Naive thymus-derived CD4-positive, alpha-beta T cell (primary cell): ENCODE measurements at regions of chr21 and their contacts with region 1.

Region 1: GRCh38 chr21:14523234-14523633 is 22.9 kb downstream of the SAMSN1 start:
- DNase-seq: peak in 1 of 9 donors; percentile 55
- ATAC-seq: peak; percentile 74
- H3K4me3 ChIP-seq: no peak overlapping the region
- H3K4me3 Mint-ChIP-seq: peak overlapping the region in 9 of 10 donors; percentile 22 to 85 (median 50)
- H3K27ac ChIP-seq: no peak overlapping the region
- H3K27ac Mint-ChIP-seq: peak overlapping the region in 6 of 9 donors; percentile 9 to 85 (median 72)
- H3K4me1 ChIP-seq: peaks cover 16 to 29% of the 10 kb centered on the region in 2 donors
- H3K4me1 Mint-ChIP-seq: peaks cover 32 to 74% (median 66%) of the 10 kb centered on the region in 7 donors
- H3K27me3 ChIP-seq: no peaks in the 10 kb centered on the region
- H3K27me3 Mint-ChIP-seq: no peaks in the 10 kb centered on the region

Region 2: GRCh38 chr21:14469641-14470040 is 53.6 kb before region 1 on chr21:
- CTCF ChIA-PET with region 1: no interaction called
- POLR2A ChIA-PET with region 1: no interaction called
- intact Hi-C with region 1: no loop called
- DNase-seq: no peak
- ATAC-seq: no peak
- H3K4me3 ChIP-seq: no peak overlapping the region
- H3K4me3 Mint-ChIP-seq: no peak overlapping the region
- H3K27ac ChIP-seq: no peak overlapping the region
- H3K27ac Mint-ChIP-seq: no peak overlapping the region
- H3K4me1 ChIP-seq: no peaks in the 10 kb centered on the region
- H3K4me1 Mint-ChIP-seq: peaks cover 0 to 3% (median 0%) of the 10 kb centered on the region in 7 donors
- H3K27me3 ChIP-seq: no peaks in the 10 kb centered on the region
- H3K27me3 Mint-ChIP-seq: no peaks in the 10 kb centered on the region

Region 3: DNA sequence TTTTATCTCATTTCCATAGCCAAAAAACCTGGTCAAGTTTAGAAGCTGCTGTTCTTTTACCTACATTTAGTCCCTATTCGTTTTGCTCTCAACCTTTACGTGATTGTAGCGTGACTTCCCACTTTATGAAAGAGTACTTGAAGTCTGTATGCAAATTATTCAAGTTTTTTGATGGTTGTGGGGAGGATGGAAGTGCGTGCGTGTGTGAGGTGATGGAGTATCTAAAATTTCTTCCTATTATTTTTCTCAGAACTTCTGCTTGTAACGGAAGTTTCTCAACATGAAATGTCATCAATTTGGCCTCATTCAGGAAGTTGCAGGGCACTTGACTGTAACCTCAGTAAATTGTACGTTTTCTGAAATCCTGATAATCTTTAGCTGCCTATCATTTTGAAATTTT is 41.1 kb before region 1 on chr21:
- CTCF ChIA-PET with region 1: no interaction called
- POLR2A ChIA-PET with region 1: no interaction called
- intact Hi-C with region 1: loop called in 1 of 2 experiments (anchors 5 kb)
- DNase-seq: peak in 7 of 9 donors; percentile 29 to 66 (median 53)
- ATAC-seq: peak; percentile 89
- H3K4me3 ChIP-seq: peak overlapping the region; percentile 34
- H3K4me3 Mint-ChIP-seq: peak overlapping the region; percentile 1 to 79 (median 68)
- H3K27ac ChIP-seq: peak overlapping the region; percentile 9
- H3K27ac Mint-ChIP-seq: peak overlapping the region; percentile 37 to 90 (median 72)
- H3K4me1 ChIP-seq: peaks cover 0 to 13% of the 10 kb centered on the region in 2 donors
- H3K4me1 Mint-ChIP-seq: peaks cover 8 to 64% (median 16%) of the 10 kb centered on the region in 7 donors
- H3K27me3 ChIP-seq: no peaks in the 10 kb centered on the region
- H3K27me3 Mint-ChIP-seq: no peaks in the 10 kb centered on the region

Region 4: GRCh38 chr21:14492931-14493330 is 30.3 kb before region 1 on chr21:
- CTCF ChIA-PET with region 1: no interaction called
- POLR2A ChIA-PET with region 1: no interaction called
- intact Hi-C with region 1: loop called in 1 of 2 experiments (anchors 2 kb)
- DNase-seq: no peak
- ATAC-seq: no peak
- H3K4me3 ChIP-seq: no peak overlapping the region
- H3K4me3 Mint-ChIP-seq: no peak overlapping the region
- H3K27ac ChIP-seq: no peak overlapping the region
- H3K27ac Mint-ChIP-seq: peak overlapping the region in 2 of 9 donors; percentile 5 to 18
- H3K4me1 ChIP-seq: no peaks in the 10 kb centered on the region
- H3K4me1 Mint-ChIP-seq: peaks cover 7 to 57% (median 16%) of the 10 kb centered on the region in 7 donors
- H3K27me3 ChIP-seq: no peaks in the 10 kb centered on the region
- H3K27me3 Mint-ChIP-seq: no peaks in the 10 kb centered on the region

Region 5: DNA sequence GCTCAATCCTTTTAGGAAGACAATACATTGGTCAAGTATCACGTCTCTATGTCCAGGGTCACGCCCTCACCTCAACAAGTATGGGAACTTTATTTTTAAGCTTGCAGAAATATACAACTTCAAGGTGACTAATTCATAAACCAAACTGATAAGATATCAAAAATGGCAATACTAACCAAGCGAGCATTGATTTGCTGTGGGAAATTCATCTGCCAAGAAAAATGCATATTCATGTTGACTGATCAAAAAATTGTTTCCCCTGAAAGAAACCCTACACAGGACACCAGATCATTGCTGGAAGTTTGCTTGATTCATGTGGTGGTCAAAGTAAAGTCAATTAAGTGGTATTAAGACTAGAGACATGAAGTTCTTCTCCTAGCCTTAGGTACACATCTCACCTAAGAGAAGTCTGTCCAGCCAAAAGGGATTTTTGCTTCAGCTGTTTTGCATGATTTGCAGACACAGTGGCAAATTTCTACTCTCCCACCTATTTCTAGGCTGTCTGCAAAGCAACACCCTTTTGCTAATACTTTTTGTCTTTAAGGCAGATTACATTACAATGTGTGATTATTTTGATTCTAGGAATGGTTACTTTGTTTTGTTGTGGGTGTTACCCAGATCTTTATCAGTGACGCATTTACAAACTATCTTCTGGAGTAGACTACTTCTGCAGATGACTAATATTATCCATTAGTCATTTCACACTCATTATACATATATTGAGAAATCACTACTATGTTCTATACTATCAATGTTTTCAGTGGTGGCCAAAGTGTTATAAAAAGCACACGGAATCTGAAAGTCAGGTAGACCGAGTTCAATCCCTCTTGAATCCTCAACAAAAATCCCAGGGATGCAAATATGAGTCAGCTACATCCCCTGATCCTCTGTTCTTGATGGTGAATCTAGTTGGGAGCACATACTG is 10.5 kb after region 1 on chr21:
- CTCF ChIA-PET with region 1: interaction called, 5 read pairs
- POLR2A ChIA-PET with region 1: interaction called, 3 read pairs
- intact Hi-C with region 1: loop called (anchors 1 kb)
- DNase-seq: peak in 3 of 9 donors; percentile 15 to 49 (median 22)
- ATAC-seq: peak; percentile 88
- H3K4me3 ChIP-seq: peak overlapping the region; percentile 22
- H3K4me3 Mint-ChIP-seq: peak overlapping the region in 8 of 10 donors; percentile 3 to 85 (median 47)
- H3K27ac ChIP-seq: no peak overlapping the region
- H3K27ac Mint-ChIP-seq: peak overlapping the region in 8 of 9 donors; percentile 25 to 95 (median 82)
- H3K4me1 ChIP-seq: peaks cover 10 to 30% of the 10 kb centered on the region in 2 donors
- H3K4me1 Mint-ChIP-seq: peaks cover 37 to 81% (median 67%) of the 10 kb centered on the region in 7 donors
- H3K27me3 ChIP-seq: no peaks in the 10 kb centered on the region
- H3K27me3 Mint-ChIP-seq: no peaks in the 10 kb centered on the region

Region 6: DNA sequence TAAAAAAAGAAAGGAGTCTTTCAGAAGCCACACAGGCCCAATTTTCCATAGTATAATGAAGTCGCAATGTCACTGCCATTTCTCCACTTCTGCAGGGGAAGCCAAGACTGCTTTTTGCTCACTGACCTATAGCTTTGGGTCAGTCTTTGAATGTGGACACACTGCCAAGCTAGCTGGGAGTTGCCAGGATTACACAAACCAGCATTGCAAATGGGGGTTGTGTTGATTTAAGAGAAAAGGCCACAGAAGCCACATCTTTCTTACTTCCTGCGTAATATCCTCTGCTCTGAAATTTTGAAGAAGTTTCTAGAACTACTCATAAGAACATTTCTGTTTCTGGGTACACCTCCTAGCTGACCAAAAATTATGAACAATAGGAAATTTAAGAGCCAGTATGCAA is 68.6 kb after region 1 on chr21:
- CTCF ChIA-PET with region 1: interaction called, 4 read pairs
- POLR2A ChIA-PET with region 1: no interaction called
- intact Hi-C with region 1: loop called in 1 of 2 experiments (anchors 5 kb)
- DNase-seq: peak in 4 of 9 donors; percentile 6 to 24 (median 11)
- ATAC-seq: peak; percentile 91
- H3K4me3 ChIP-seq: no peak overlapping the region
- H3K4me3 Mint-ChIP-seq: peak overlapping the region in 3 of 10 donors; percentile 3 to 70 (median 22)
- H3K27ac ChIP-seq: no peak overlapping the region
- H3K27ac Mint-ChIP-seq: peak overlapping the region in 4 of 9 donors; percentile 4 to 90 (median 33)
- H3K4me1 ChIP-seq: peaks cover 3 to 11% of the 10 kb centered on the region in 2 donors
- H3K4me1 Mint-ChIP-seq: peaks cover 8 to 43% (median 15%) of the 10 kb centered on the region in 7 donors
- H3K27me3 ChIP-seq: no peaks in the 10 kb centered on the region
- H3K27me3 Mint-ChIP-seq: no peaks in the 10 kb centered on the region